Activated CD4-positive, alpha-beta memory T cell treated with anti-CD3 and anti-CD28 coated beads, Interleukin-2, amount 10 ng/mL, durations not matched to agents 7 days and 5 days (primary cell): ENCODE measurements at regions of chr9 and their contacts with region 1.

Region 1: GRCh38 chr9:77163884-77164283 is 13.4 kb upstream of the VPS13A start:
- DNase-seq: no peak
- H3K4me3 Mint-ChIP-seq: no peak overlapping the region
- H3K27ac Mint-ChIP-seq: no peak overlapping the region
- H3K4me1 Mint-ChIP-seq: peaks cover 1% of the 10 kb centered on the region
- H3K27me3 Mint-ChIP-seq: peaks cover 15% of the 10 kb centered on the region

Region 2: GRCh38 chr9:77131399-77131798 is 32.5 kb before region 1 on chr9:
- CTCF ChIA-PET with region 1: no interaction called
- POLR2A ChIA-PET with region 1: no interaction called
- DNase-seq: no peak
- H3K4me3 Mint-ChIP-seq: no peak overlapping the region
- H3K27ac Mint-ChIP-seq: no peak overlapping the region
- H3K4me1 Mint-ChIP-seq: no peaks in the 10 kb centered on the region
- H3K27me3 Mint-ChIP-seq: peaks cover 10% of the 10 kb centered on the region

Region 3: GRCh38 chr9:77177161-77177893 is 13.4 kb after region 1 on chr9 and contains the start of gene VPS13A:
- CTCF ChIA-PET with region 1: interaction called, 31 read pairs
- POLR2A ChIA-PET with region 1: interaction called, 8 read pairs
- DNase-seq: peak; percentile 94
- H3K4me3 Mint-ChIP-seq: peak within 1 kb of the TSS; percentile 88
- H3K27ac Mint-ChIP-seq: peak within 1 kb of the TSS; percentile 80
- H3K4me1 Mint-ChIP-seq: peaks cover 25% of the 10 kb centered on the region
- H3K27me3 Mint-ChIP-seq: peaks cover 2% of the 10 kb centered on the region
- total RNA-seq, gene VPS13A: 40.9 to 42.3 TPM

Region 4: GRCh38 chr9:77215874-77216273 is 52.0 kb after region 1 on chr9:
- CTCF ChIA-PET with region 1: interaction called, 16 read pairs
- POLR2A ChIA-PET with region 1: no interaction called
- DNase-seq: no peak
- H3K4me3 Mint-ChIP-seq: no peak overlapping the region
- H3K27ac Mint-ChIP-seq: no peak overlapping the region
- H3K4me1 Mint-ChIP-seq: no peaks in the 10 kb centered on the region
- H3K27me3 Mint-ChIP-seq: no peaks in the 10 kb centered on the region

Region 5: DNA sequence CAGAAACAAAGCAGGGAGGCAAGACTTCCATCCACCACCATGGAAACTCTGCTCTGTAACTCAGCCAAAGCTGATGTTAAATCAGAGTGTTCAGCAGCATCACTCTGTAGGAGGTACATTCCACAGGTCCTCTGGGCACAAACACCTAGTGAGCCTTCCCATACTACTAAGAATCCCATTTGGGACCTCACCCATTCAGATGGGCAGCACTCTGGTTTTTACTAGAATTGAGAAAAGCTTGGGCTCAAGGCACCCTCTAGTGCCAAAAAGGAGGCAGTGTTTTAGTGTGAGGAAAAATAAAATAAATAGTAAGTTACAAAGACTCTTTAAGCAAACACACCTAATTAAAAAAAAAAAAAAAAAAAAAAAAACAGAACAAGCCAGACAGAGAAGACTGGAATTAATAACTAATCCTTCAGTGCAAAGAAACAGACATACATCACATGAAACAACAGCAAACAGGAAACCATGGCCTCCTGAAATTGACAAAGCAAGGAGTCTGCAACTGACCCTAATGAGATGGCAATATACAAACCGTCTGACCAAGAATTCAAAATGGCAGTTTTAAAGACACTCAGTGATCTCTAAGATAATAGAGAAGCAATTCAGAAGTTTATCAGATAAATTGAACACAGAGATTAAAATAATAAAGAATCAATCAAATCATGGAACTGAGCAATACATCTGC is 324.7 kb after region 1 on chr9:
- CTCF ChIA-PET with region 1: interaction called, 12 read pairs
- POLR2A ChIA-PET with region 1: no interaction called
- DNase-seq: no peak
- H3K4me3 Mint-ChIP-seq: peak overlapping the region; percentile 74
- H3K27ac Mint-ChIP-seq: no peak overlapping the region
- H3K4me1 Mint-ChIP-seq: peaks cover 34% of the 10 kb centered on the region
- H3K27me3 Mint-ChIP-seq: peaks cover 6% of the 10 kb centered on the region

Region 6: DNA sequence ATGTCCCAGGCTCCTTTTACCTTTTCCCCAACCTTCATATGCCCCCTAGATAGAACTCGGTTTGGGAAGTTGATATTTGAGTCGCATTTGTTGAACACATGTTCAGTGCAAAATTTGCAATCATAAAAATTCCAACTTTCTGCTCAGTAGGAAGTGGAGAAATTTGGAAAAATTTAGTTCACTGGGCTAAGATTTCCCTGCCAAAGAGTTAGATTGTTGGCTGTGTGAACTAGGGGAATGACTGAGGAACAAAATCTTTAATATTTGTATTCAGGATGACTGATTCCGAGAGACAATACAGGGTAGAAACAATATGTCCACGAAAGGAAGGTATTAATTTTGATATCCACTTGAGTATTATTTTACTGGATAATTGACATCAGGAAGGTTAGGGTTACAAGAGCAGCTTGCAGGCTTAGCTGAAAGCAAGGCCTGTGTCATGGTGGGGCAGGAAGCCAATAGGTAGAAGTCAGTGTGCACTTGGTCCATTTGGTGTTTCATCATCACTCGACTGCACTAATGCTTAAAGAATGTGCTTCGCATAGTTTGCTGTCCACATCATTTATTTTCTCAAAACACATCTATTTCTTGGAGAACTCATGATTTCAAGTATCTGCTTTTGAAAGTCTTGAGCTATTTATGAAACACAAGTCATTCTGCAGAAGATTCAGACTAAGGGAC is 543.6 kb after region 1 on chr9:
- CTCF ChIA-PET with region 1: no interaction called
- POLR2A ChIA-PET with region 1: no interaction called
- DNase-seq: no peak
- H3K4me3 Mint-ChIP-seq: no peak overlapping the region
- H3K27ac Mint-ChIP-seq: no peak overlapping the region
- H3K4me1 Mint-ChIP-seq: no peaks in the 10 kb centered on the region
- H3K27me3 Mint-ChIP-seq: peaks cover 3% of the 10 kb centered on the region